ENCODE measurements at regions of chr6 and their contacts with region 1.

Region 1: GRCh38 chr6:121717686-121718085 is 282.2 kb downstream of the GJA1 start:
- DNase-seq: no peak
- ATAC-seq: no peak
- H3K4me3 ChIP-seq: no peak overlapping the region
- H3K27ac ChIP-seq: no peak overlapping the region
- H3K4me1 ChIP-seq: no peaks in the 10 kb centered on the region
- H3K27me3 ChIP-seq: no peaks in the 10 kb centered on the region
- CTCF ChIP-seq: no peak
- POLR2A ChIP-seq: no peak

Region 2: GRCh38 chr6:121627761-121628160 is 89.9 kb before region 1 on chr6:
- intact Hi-C with region 1: no loop called
- DNase-seq: no peak
- ATAC-seq: no peak
- H3K4me3 ChIP-seq: no peak overlapping the region
- H3K27ac ChIP-seq: no peak overlapping the region
- H3K4me1 ChIP-seq: peaks cover 0 to 3% (median 0%) of the 10 kb centered on the region in 12 donors
- H3K27me3 ChIP-seq: no peaks in the 10 kb centered on the region
- CTCF ChIP-seq: no peak
- POLR2A ChIP-seq: no peak

Region 3: GRCh38 chr6:121771937-121772720 is 54.4 kb after region 1 on chr6:
- intact Hi-C with region 1: loop called in 2 of 10 experiments (anchors 5 to 10 kb)
- DNase-seq: no peak
- ATAC-seq: peak in 1 of 4 donors; percentile 47
- H3K4me3 ChIP-seq: no peak overlapping the region
- H3K27ac ChIP-seq: peak overlapping the region in 2 of 12 donors; percentile 15 to 50
- H3K4me1 ChIP-seq: peaks cover 0 to 20% (median 0%) of the 10 kb centered on the region in 12 donors
- H3K27me3 ChIP-seq: no peaks in the 10 kb centered on the region
- CTCF ChIP-seq: no peak
- POLR2A ChIP-seq: no peak